ENCODE measurements at regions of chr20 and their contacts with region 1.

Region 1: GRCh38 chr20:44056010-44056698 is 130.8 kb downstream of the JPH2 start:
- DNase-seq: no peak
- ATAC-seq: peak; percentile 93
- H3K4me3 ChIP-seq: no peak overlapping the region
- H3K27ac ChIP-seq: no peak overlapping the region
- H3K4me1 ChIP-seq: no peaks in the 10 kb centered on the region
- H3K27me3 ChIP-seq: no peaks in the 10 kb centered on the region
- CTCF ChIP-seq: peak; percentile 38 to 53 (median 47); a peak in 4 of 6 replicates
- EP300 ChIP-seq: no peak
- POLR2A ChIP-seq: no peak
- RAD21 ChIP-seq: peak; percentile 72

Region 2: GRCh38 chr20:43936104-43936770 is 119.9 kb before region 1 on chr20:
- CTCF ChIA-PET with region 1: no interaction called
- POLR2A ChIA-PET with region 1: no interaction called
- RAD21 ChIA-PET with region 1: no interaction called
- SMC1A ChIA-PET with region 1: no interaction called
- in situ Hi-C with region 1: no loop called
- intact Hi-C with region 1: no loop called
- DNase-seq: no peak
- ATAC-seq: no peak; the same call in 2 of the 3 replicates
- H3K4me3 ChIP-seq: no peak overlapping the region
- H3K27ac ChIP-seq: no peak overlapping the region
- H3K4me1 ChIP-seq: 0 out of 2 replicates have a peak, but pooled peaks cover 2% of the 10 kb centered on the region
- H3K27me3 ChIP-seq: no peaks in the 10 kb centered on the region
- CTCF ChIP-seq: no peak
- EP300 ChIP-seq: no peak
- POLR2A ChIP-seq: no peak
- RAD21 ChIP-seq: no peak

Region 3: GRCh38 chr20:43948455-43948854 is 107.7 kb before region 1 on chr20:
- CTCF ChIA-PET with region 1: no interaction called
- POLR2A ChIA-PET with region 1: no interaction called
- RAD21 ChIA-PET with region 1: no interaction called
- SMC1A ChIA-PET with region 1: no interaction called
- in situ Hi-C with region 1: no loop called
- intact Hi-C with region 1: no loop called
- DNase-seq: no peak
- ATAC-seq: no peak
- H3K4me3 ChIP-seq: no peak overlapping the region
- H3K27ac ChIP-seq: no peak overlapping the region
- H3K4me1 ChIP-seq: peaks cover 24% of the 10 kb centered on the region
- H3K27me3 ChIP-seq: no peaks in the 10 kb centered on the region
- CTCF ChIP-seq: no peak
- EP300 ChIP-seq: no peak
- POLR2A ChIP-seq: no peak
- RAD21 ChIP-seq: no peak

Region 4: DNA sequence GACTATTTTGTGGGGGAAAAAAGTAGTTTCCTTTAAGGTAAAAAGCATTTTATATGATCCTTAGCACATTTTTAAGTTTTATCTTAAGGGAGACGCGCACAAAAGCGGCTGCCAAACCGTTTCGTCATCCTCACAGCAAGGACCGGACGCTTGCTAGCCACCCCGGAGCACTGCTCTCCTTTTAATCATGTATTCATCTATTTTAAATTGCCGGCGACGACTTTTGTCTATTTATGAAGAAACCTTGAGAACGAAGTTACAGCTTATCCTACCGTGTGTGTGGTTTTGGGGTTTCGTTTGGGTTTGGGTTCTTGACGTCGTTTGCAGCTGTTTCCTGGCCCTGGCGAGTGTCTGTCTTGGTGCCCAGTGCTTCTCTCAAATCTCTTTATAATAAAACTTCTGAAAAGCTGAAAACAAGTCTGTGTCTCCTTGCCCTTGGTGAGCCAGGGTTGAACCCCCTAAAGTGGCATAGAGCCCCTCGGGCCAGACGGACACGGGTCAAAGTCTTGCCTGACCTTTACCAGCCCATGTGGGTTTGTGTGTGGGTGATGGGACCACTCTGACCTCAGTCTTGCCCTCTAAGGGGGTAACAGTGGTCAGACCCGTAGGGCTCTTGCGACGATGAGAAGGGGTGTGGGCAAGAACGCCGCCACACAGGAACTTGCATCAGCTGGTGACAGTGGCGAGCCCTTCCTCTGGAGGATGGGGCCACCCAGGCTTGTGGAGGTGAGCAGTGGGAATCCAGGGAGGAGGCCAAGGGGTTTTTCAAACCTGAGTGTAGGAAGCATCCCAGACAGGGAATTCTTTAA is 13.3 kb after region 1 on chr20:
- CTCF ChIA-PET with region 1: interaction called, 4 read pairs
- POLR2A ChIA-PET with region 1: no interaction called
- RAD21 ChIA-PET with region 1: interaction called, 3 read pairs
- SMC1A ChIA-PET with region 1: interaction called, 15 read pairs
- in situ Hi-C with region 1: no loop called
- intact Hi-C with region 1: no loop called
- DNase-seq: peak; percentile 57
- ATAC-seq: peak; percentile 79
- H3K4me3 ChIP-seq: peak overlapping the region; percentile 54
- H3K27ac ChIP-seq: peak overlapping the region; percentile 32; the same call in 1 of the 2 replicates
- H3K4me1 ChIP-seq: peaks cover 18% of the 10 kb centered on the region
- H3K27me3 ChIP-seq: no peaks in the 10 kb centered on the region
- CTCF ChIP-seq: no peak
- EP300 ChIP-seq: peak; percentile 77 to 91
- POLR2A ChIP-seq: peak; percentile 31; the same call in 1 of the 2 replicates
- RAD21 ChIP-seq: no peak

Region 5: GRCh38 chr20:44097521-44098255 is 41.5 kb after region 1 on chr20:
- CTCF ChIA-PET with region 1: no interaction called
- POLR2A ChIA-PET with region 1: no interaction called
- RAD21 ChIA-PET with region 1: no interaction called
- SMC1A ChIA-PET with region 1: no interaction called
- in situ Hi-C with region 1: no loop called
- intact Hi-C with region 1: no loop called
- DNase-seq: no peak
- ATAC-seq: no peak
- H3K4me3 ChIP-seq: no peak overlapping the region
- H3K27ac ChIP-seq: no peak overlapping the region
- H3K4me1 ChIP-seq: no peaks in the 10 kb centered on the region
- H3K27me3 ChIP-seq: no peaks in the 10 kb centered on the region
- CTCF ChIP-seq: no peak
- EP300 ChIP-seq: no peak
- POLR2A ChIP-seq: no peak
- RAD21 ChIP-seq: no peak